ENCODE measurements at regions of chr10 and their contacts with region 1.

Region 1: DNA sequence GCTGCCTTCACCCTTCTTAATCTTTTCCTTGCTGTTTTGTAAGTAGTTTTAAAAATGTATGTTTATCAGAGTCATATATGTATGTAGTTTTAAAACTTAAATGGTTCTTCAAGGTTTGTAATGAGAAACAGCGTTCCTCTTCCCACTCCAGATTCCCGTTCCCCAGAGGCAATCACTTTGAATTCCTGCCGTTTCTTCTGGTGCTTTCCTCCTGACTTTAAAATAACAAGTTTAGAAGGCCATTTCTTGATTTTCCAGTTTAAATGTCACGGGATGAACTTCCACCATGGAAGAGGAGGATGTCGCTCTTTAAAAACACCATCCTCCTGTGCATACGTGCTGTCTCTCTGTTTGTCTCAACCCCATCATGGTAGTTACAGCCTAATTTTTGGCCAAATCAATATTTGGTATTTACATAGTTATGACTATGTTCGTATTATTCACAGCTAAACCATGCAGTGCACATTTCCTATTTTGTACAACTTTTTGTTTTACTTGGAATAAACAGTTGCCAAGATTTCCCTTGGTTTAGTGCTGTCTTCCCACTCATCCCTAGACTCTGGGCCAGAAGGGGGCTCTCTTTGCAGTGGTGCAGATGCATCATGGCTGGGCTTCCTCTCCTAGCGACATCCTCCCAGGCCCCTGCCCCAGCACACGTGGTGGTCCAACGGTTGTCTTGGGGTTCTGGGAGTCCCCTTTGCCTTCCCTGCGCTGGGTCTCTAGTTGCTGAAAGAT is 151.4 kb downstream of the PTPN20 start:
- DNase-seq: no peak
- ATAC-seq: no peak
- H3K4me3 ChIP-seq: no peak overlapping the region
- H3K27ac ChIP-seq: no peak overlapping the region
- H3K4me1 ChIP-seq: no peaks in the 10 kb centered on the region; the same call in 1 of the 2 replicates
- H3K27me3 ChIP-seq: peaks cover 2% of the 10 kb centered on the region; the same call in 1 of the 2 replicates
- CTCF ChIP-seq: no peak; the same call in 1 of the 2 replicates

Region 2: DNA sequence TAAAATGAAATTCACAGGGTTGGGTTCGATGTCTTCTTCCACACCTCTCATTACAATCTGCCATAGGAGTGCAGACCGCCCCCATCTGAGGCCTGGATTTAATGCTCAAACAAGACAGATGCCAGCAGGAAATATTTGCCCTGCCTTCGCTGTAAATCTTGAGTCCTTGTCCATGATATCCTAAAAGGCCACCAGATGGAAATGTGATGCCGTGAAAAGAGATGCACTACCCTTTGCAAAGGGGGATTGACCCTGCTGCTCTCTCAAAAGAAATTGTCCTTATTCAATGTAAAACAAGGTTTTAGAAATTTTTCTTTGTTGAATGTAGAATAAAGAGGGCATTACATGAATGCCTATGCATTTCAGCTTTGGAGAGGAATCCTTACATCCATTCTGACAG is 1252.8 kb before region 1 on chr10:
- CTCF ChIA-PET with region 1: no interaction called
- POLR2A ChIA-PET with region 1: interaction called, 13 read pairs
- in situ Hi-C with region 1: no loop called
- intact Hi-C with region 1: no loop called
- DNase-seq: no peak
- ATAC-seq: no peak
- H3K4me3 ChIP-seq: no peak overlapping the region
- H3K27ac ChIP-seq: no peak overlapping the region
- H3K4me1 ChIP-seq: no peaks in the 10 kb centered on the region
- H3K27me3 ChIP-seq: no peaks in the 10 kb centered on the region
- CTCF ChIP-seq: no peak

Region 3: GRCh38 chr10:47165711-47166524 is 103.3 kb after region 1 on chr10:
- CTCF ChIA-PET with region 1: no interaction called
- POLR2A ChIA-PET with region 1: interaction called, 10 read pairs
- in situ Hi-C with region 1: no loop called
- intact Hi-C with region 1: no loop called
- DNase-seq: no peak
- ATAC-seq: peak; percentile 72
- H3K4me3 ChIP-seq: peak overlapping the region; percentile 19 to 33
- H3K27ac ChIP-seq: peak overlapping the region; percentile 46
- H3K4me1 ChIP-seq: peaks cover 23% of the 10 kb centered on the region
- H3K27me3 ChIP-seq: no peaks in the 10 kb centered on the region
- CTCF ChIP-seq: peak; percentile 14; the same call in 1 of the 2 replicates

Measured in Panc1 (cell line).